Activated CD4-positive, alpha-beta T cell treated with anti-CD3 and anti-CD28 coated beads, Interleukin-2, amount 10 ng/mL, durations not matched to agents 24 days and 14 days (primary cell): ENCODE measurements at regions of chr2 and their contacts with region 1.

Region 1: DNA sequence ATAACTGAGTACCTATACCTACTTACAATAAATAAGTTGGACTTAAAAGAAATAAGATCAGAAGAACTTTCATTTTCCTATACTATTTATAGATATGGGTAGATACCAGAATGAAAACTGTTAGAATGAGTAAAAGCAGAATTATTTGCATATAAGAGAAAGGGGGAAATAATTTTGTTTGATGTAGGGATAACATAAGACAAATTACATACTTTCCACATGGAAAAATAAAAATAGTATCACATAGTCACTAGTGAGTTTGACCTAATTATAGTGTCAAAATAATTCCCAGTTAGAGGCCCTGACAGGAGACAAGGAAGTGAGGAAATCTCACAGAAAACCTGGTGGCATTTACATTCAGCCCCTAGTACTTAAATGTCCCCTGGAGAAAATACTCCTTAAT is 28.6 kb downstream of the KCMF1 start:
- DNase-seq: no peak
- H3K4me3 Mint-ChIP-seq: peak overlapping the region; percentile 59
- H3K27ac Mint-ChIP-seq: peak overlapping the region; percentile 87
- H3K4me1 Mint-ChIP-seq: peaks cover 50% of the 10 kb centered on the region
- H3K27me3 Mint-ChIP-seq: no peaks in the 10 kb centered on the region

Region 2: DNA sequence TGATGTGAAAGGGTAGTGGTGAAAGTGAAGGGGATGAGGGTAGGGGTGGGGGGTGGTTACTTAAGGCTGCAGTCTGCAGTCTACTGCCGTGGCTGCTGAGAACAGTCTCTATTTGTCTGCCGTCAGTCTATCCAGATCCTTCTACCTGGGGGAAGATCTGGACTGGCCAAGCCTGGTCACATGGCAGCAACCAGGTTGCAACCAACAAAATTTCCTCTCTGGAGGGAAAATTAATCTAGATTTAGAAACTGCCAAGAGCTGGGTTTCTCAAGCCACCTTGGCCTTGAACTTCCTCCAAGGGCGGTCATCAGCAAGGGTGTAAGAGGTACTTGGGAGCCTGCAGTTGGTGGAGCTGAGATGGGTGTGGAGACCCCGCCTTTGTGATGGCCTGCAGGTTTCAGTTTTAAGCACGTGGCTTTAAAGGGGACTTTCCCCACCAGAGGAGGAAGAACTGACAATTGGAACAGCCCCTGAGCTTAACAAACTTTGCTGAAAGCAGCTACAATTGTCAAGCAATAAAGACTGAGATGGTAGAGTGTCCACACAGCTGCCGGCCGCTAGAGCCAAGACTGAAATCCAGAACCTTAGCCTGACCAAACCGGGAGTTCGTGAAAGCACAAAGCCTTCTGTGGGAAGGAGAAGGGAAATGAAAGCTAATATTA is 60.0 kb before region 1 on chr2:
- intact Hi-C with region 1: loop called (anchors 1 kb)
- DNase-seq: peak; percentile 95
- H3K4me3 Mint-ChIP-seq: peak overlapping the region; percentile 84
- H3K27ac Mint-ChIP-seq: peak overlapping the region; percentile 98
- H3K4me1 Mint-ChIP-seq: peaks cover 45% of the 10 kb centered on the region
- H3K27me3 Mint-ChIP-seq: no peaks in the 10 kb centered on the region

Region 3: GRCh38 chr2:84989422-84989821 is 10.1 kb before region 1 on chr2:
- intact Hi-C with region 1: loop called (anchors 1 kb)
- DNase-seq: no peak
- H3K4me3 Mint-ChIP-seq: no peak overlapping the region
- H3K27ac Mint-ChIP-seq: no peak overlapping the region
- H3K4me1 Mint-ChIP-seq: peaks cover 33% of the 10 kb centered on the region
- H3K27me3 Mint-ChIP-seq: no peaks in the 10 kb centered on the region

Region 4: DNA sequence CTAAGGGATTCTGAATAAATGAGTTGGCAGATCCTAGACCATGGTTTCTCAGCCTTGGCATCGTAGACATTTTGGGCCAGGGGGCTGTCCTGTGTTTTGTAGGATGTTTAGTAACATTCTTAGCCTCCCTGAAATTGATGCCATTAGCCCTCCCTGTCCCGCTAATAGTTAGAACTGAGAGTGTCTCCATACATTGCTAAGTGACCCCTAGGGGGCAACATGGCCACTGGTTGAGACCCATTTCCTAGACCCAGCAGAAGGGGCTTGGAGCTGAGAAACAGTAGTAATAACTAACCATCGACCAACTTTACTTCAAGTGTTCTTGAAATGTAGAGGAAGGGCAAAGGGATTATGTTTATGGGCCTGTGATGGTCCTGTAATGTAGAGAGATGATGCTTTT is 12.2 kb after region 1 on chr2:
- intact Hi-C with region 1: loop called (anchors 1 kb)
- DNase-seq: no peak
- H3K4me3 Mint-ChIP-seq: peak overlapping the region; percentile 21
- H3K27ac Mint-ChIP-seq: peak overlapping the region; percentile 72
- H3K4me1 Mint-ChIP-seq: peaks cover 67% of the 10 kb centered on the region
- H3K27me3 Mint-ChIP-seq: no peaks in the 10 kb centered on the region